ENCODE measurements at regions of chr9 and their contacts with region 1.

Region 1: GRCh38 chr9:21789541-21790037 is 12.8 kb upstream of the MTAP start:
- DNase-seq: no peak
- H3K4me3 ChIP-seq: peak overlapping the region in 1 of 4 experiments; percentile 44; a peak in 1 of 8 replicates
- H3K27ac ChIP-seq: no peak overlapping the region
- H3K4me1 ChIP-seq: no peaks in the 10 kb centered on the region
- H3K27me3 ChIP-seq: 0 out of 7 replicates have a peak, but pooled peaks cover 0 to 2% (median 0%) of the 10 kb centered on the region in 4 experiments
- CTCF ChIP-seq: peak in 2 of 3 experiments; percentile 72 to 80; a peak in 3 of 4 replicates
- EP300 ChIP-seq: no peak
- POLR2A ChIP-seq: no peak
- RAD21 ChIP-seq: peak; percentile 81 to 86

Region 2: DNA sequence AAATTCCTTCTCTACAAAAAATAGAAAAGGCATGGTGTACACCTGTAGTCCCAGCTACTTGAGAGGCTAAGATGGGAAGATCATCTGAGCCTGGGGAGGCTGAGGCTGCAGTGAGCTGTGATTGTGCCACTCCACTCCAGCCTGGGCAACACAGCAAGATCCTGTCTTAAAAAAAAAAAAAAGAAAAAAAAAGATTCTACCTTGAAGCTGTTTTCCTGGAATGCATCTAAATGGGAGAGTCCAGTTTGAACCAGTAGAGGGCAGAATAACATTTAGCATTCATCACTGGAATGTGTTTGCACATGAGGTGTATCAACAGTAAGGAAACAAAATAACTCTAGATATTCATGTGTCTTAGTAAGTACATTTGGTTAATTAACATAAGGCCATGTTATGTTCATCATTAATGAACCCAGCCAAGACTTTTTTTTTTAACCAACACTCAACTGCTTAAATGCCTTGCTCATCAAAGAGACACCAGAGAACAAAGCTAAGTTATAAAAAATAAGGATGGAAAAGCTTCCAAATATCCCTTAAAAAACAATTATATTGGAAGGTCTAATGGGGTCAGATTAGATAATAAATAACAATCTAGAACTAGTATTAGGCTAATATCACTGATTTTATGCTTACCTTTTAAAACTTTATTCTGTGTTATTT is 323.6 kb before region 1 on chr9:
- CTCF ChIA-PET with region 1: interaction called, 37 read pairs
- POLR2A ChIA-PET with region 1: no interaction called
- DNase-seq: no peak
- H3K4me3 ChIP-seq: no peak overlapping the region
- H3K27ac ChIP-seq: no peak overlapping the region
- H3K4me1 ChIP-seq: no peaks in the 10 kb centered on the region
- H3K27me3 ChIP-seq: no peaks in the 10 kb centered on the region
- CTCF ChIP-seq: peak in 2 of 3 experiments; percentile 60 to 63; a peak in 2 of 4 replicates
- EP300 ChIP-seq: no peak
- POLR2A ChIP-seq: no peak
- RAD21 ChIP-seq: peak; percentile 81 to 82

Region 3: DNA sequence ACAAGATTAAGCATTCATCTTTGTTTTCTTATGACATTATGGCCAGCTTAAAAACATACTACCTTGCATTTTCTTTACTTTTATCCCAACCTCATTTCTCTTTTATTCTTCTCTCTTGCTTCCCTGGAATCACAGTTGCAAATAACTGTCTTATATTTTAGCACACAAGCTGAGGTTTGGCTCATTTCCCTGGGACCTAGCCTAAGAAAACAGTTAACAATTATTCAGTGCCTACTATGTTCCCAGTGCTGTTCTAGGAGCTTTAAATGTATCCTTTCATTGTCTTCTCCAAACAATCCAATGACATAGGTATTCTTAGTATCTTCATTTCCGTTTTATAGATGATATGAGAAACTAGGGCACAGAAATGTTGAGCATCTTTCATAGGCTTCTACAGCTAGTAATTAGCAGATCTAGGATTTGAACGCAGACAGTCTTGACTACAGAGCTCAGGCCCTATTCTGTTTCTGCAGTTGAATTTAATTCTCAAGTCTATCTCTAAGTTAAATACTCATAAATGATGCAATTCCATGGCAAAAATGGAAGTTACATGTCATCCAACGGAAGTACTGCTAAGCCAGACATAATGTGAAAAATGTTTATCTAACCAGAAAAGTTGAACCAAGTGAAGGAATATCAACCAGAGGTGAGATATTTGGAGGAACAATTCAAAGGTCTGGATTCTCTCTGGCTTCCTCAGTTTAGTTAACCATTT is 39.4 kb before region 1 on chr9:
- CTCF ChIA-PET with region 1: interaction called, 10 read pairs
- POLR2A ChIA-PET with region 1: no interaction called
- DNase-seq: no peak
- H3K4me3 ChIP-seq: no peak overlapping the region
- H3K27ac ChIP-seq: no peak overlapping the region
- H3K4me1 ChIP-seq: peaks cover 0 to 2% (median 0%) of the 10 kb centered on the region in 4 experiments; a peak in 1 of 7 replicates
- H3K27me3 ChIP-seq: peaks cover 61 to 98% (median 91%) of the 10 kb centered on the region in 4 experiments
- CTCF ChIP-seq: no peak
- EP300 ChIP-seq: no peak
- POLR2A ChIP-seq: no peak
- RAD21 ChIP-seq: no peak